Activated CD4-positive, alpha-beta T cell treated with anti-CD3 and anti-CD28 coated beads, Interleukin-2, amount 10 ng/mL, durations not matched to agents 7 days and 5 days (primary cell): ENCODE measurements at regions of chr16 and their contacts with region 1.

Region 1: DNA sequence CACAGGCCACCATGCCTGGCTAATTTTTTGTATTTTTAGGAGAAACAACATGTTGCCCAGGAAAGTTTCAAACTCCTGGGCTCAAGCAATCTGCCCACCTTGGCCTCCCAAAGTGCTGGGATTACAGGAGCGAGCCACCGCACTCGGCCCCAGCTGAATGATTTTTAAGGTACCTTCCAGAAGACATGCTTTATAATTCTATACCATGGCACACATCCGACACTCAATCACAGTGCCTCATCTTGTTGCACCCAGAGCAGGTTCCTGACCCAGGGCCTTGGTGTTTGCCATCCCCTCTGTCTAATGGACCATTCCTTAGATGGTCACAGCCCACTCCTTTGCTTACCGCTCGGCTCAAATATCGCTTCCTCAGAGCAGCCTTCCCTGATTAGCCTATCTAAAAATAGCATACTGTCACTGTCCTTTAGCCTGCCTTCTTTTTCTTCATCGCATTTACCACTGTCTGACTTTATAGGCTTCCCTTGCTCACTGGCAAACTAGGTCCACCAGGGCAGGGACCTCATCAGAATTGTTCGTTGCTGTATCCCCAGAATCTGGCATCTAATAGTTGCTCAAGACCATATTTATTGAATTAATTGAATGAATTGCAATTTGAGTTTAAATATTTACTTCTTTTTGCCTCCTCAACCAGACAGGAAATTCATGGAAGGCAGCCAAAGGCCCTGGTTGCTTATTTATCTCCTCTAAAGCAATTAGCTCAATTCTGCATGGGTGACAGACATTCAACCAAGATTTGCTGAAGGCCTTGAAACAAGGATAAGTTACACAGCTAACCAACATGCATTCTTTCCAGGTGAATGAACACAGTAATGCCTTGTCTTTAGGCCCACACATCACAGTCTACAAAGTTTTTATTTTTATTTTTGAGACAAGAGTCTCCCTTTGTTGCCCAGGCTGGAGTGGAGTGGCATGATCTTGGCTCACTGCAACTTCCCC is 6.3 kb upstream of the TENT4B start:
- DNase-seq: no peak
- H3K4me3 Mint-ChIP-seq: no peak overlapping the region
- H3K27ac Mint-ChIP-seq: no peak overlapping the region
- H3K4me1 Mint-ChIP-seq: peaks cover 9% of the 10 kb centered on the region
- H3K27me3 Mint-ChIP-seq: no peaks in the 10 kb centered on the region

Region 2: GRCh38 chr16:49811644-49812334 is 335.0 kb before region 1 on chr16:
- CTCF ChIA-PET with region 1: no interaction called
- POLR2A ChIA-PET with region 1: no interaction called
- DNase-seq: no peak
- H3K4me3 Mint-ChIP-seq: no peak overlapping the region
- H3K27ac Mint-ChIP-seq: no peak overlapping the region
- H3K4me1 Mint-ChIP-seq: no peaks in the 10 kb centered on the region
- H3K27me3 Mint-ChIP-seq: no peaks in the 10 kb centered on the region

Region 3: DNA sequence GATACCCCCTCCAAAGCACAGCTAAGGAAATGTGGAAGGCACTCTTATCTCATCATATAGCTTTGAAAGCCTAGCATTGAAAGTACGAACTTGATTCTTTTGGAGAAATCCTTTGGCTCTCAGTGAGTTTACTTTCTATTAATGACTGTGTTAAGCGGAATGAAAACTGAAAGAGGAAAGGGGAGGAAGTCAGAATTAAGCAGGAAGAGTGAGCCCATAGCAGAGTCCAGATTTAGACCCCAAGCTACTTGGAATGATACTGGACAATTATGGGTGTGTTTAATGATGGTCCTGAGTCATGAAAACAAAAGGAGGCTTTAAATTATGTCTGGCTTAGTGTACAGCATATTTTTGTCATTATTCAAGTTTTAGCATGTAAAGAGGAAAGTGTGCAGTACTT is 48.5 kb after region 1 on chr16:
- CTCF ChIA-PET with region 1: no interaction called
- POLR2A ChIA-PET with region 1: interaction called, 15 read pairs
- DNase-seq: no peak
- H3K4me3 Mint-ChIP-seq: no peak overlapping the region
- H3K27ac Mint-ChIP-seq: peak overlapping the region; percentile 54
- H3K4me1 Mint-ChIP-seq: peaks cover 59% of the 10 kb centered on the region
- H3K27me3 Mint-ChIP-seq: no peaks in the 10 kb centered on the region

Region 4: DNA sequence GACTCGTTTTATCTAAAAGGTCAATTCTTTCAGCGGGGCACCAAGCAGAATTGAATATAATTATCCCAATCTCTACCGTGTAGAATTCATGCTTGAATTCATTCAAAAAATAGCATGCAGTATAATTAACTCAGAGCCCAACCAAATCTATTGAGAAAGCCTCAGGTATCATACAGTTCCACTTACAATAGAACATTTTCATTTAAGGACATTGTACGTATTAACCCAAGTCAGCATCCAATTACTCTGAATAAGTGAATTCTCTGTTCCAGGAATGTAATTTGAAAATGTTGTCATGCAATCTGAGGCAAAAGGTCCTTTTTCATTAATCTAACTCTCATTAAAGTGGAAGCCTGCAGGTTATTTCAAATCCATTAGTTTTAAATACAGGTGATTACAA is 925.8 kb after region 1 on chr16:
- CTCF ChIA-PET with region 1: no interaction called
- POLR2A ChIA-PET with region 1: no interaction called
- DNase-seq: no peak
- H3K4me3 Mint-ChIP-seq: no peak overlapping the region
- H3K27ac Mint-ChIP-seq: no peak overlapping the region
- H3K4me1 Mint-ChIP-seq: no peaks in the 10 kb centered on the region
- H3K27me3 Mint-ChIP-seq: no peaks in the 10 kb centered on the region